ENCODE measurements at regions of chr12 and their contacts with region 1.

Region 1: DNA sequence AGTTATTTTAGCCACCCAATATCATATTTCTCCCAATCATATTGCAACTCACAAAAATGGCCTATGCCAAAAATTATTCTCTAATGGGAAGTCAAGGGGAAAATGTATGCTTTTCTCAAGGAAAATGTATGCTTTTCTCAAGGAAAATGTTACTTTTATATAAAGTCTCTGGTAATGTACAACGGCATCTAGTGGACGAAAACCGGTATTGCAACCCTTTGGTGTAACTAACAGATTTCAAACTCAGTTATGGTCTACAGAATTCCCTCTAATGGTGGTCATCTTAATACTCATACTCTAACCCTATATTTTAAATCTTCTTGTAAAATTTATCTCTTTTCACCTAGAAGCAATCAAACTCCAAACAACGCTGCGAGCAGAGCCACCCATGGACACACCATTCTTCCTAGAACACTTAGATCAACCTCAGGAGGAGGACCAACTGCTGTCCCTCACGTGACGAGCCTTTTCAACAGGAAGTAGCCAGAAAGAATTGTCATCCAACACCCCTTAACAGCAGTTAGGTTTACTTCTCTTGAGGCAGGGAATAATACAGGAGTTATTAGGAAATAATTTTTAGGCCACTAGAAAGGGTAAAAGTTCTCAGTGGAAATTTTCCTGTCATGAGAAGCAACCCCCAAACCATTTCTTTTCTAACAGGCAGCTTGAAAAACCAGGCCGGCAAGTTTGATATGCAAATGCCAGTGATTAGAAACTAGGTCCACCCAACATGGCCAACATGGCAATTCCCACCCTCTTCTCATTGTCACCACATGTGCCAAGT is 20.1 kb downstream of the APOBEC1 start:
- DNase-seq: peak; percentile 21 to 44
- H3K4me3 ChIP-seq: no peak overlapping the region
- H3K27ac ChIP-seq: no peak overlapping the region
- H3K4me1 ChIP-seq: no peaks in the 10 kb centered on the region
- H3K27me3 ChIP-seq: no peaks in the 10 kb centered on the region
- CTCF ChIP-seq: peak; percentile 97

Region 2: GRCh38 chr12:6792522-6793201 is 852.9 kb before region 1 on chr12:
- CTCF ChIA-PET with region 1: no interaction called
- POLR2A ChIA-PET with region 1: no interaction called
- intact Hi-C with region 1: no loop called
- DNase-seq: no peak
- H3K4me3 ChIP-seq: no peak overlapping the region
- H3K27ac ChIP-seq: no peak overlapping the region
- H3K4me1 ChIP-seq: no peaks in the 10 kb centered on the region
- H3K27me3 ChIP-seq: peaks cover 52% of the 10 kb centered on the region
- CTCF ChIP-seq: no peak

Region 3: DNA sequence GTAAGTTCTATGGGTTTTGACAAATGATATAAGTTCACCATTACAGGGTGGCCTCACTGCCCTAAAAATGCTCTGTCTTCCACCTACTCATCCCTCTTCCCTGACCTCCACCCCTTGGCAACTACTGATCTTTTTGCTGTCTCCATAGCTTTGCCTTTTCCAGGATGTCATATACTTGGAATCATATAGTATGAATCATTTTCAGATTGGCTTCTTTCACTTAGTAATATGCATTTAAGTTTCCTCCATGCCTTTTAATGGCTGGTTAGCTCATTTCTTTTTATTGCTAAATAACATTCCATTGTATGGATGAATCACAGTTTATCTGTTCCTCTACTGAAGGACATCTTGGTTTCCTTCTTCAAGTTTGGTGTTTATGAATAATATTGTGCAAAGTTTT is 470.1 kb before region 1 on chr12:
- CTCF ChIA-PET with region 1: no interaction called
- POLR2A ChIA-PET with region 1: no interaction called
- intact Hi-C with region 1: no loop called
- DNase-seq: peak in 1 of 2 experiments; percentile 50
- H3K4me3 ChIP-seq: no peak overlapping the region
- H3K27ac ChIP-seq: no peak overlapping the region
- H3K4me1 ChIP-seq: no peaks in the 10 kb centered on the region
- H3K27me3 ChIP-seq: 0 out of 2 replicates have a peak, but pooled peaks cover 4% of the 10 kb centered on the region
- CTCF ChIP-seq: no peak

Region 4: GRCh38 chr12:7705831-7706230 is 60.2 kb after region 1 on chr12:
- CTCF ChIA-PET with region 1: no interaction called
- POLR2A ChIA-PET with region 1: no interaction called
- intact Hi-C with region 1: no loop called
- DNase-seq: no peak
- H3K4me3 ChIP-seq: no peak overlapping the region
- H3K27ac ChIP-seq: no peak overlapping the region
- H3K4me1 ChIP-seq: no peaks in the 10 kb centered on the region
- H3K27me3 ChIP-seq: no peaks in the 10 kb centered on the region
- CTCF ChIP-seq: no peak

Region 5: DNA sequence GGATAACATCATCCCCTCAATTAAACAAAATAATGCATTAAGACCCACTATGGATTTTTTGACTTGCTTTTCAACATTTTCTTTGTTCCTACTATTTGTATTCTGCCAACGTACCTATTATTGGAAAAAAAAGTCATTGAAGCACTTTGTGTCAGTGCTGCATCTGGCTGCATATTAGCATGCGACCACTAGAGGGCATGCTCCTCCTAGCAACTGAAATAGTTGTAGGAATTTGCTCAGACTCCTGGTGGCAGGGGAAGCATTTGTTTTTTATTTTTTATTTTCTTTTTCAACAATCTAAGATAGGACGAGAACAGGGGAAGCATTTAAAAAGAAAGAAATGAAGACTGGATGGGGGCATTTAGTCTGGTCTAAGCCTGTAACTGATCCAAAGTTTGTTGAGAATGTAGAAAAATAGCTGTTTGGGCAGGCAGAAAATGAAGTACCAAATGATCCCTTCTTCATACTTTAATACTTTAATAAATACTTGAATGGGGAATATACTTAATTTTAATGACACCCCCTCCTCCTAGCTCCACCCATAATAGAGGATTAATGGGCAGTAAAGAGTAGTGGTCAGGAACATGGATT is 463.3 kb after region 1 on chr12:
- CTCF ChIA-PET with region 1: no interaction called
- POLR2A ChIA-PET with region 1: no interaction called
- intact Hi-C with region 1: loop called (anchors 10 kb)
- DNase-seq: peak; percentile 75 to 78
- H3K4me3 ChIP-seq: no peak overlapping the region
- H3K27ac ChIP-seq: no peak overlapping the region
- H3K4me1 ChIP-seq: no peaks in the 10 kb centered on the region
- H3K27me3 ChIP-seq: no peaks in the 10 kb centered on the region
- CTCF ChIP-seq: peak; percentile 99

Region 6: DNA sequence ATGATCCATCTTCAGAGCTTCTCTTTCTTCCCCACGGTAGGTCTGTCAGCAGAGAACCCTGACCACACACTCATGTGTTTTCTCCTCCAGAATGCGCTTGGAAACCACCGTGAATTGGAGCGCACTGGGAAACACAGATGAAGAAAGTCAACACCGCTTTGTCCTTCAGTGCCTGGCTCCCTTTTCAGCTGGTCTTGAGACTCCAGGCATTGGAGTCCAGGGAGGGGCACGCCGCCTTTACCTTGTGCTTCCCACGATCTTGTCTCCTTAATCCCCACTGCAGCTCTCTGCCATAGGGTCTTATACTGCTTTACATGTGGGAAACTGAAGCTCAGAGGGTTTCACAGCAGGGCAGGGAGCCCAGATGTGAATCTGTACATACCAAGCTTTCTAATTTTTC is 580.8 kb after region 1 on chr12:
- CTCF ChIA-PET with region 1: no interaction called
- POLR2A ChIA-PET with region 1: no interaction called
- intact Hi-C with region 1: loop called (anchors 10 kb)
- DNase-seq: no peak
- H3K4me3 ChIP-seq: no peak overlapping the region
- H3K27ac ChIP-seq: no peak overlapping the region
- H3K4me1 ChIP-seq: peaks cover 4% of the 10 kb centered on the region; the same call in 1 of the 2 replicates
- H3K27me3 ChIP-seq: no peaks in the 10 kb centered on the region
- CTCF ChIP-seq: no peak

Measured in PC-9 (cell line).